ENCODE measurements at regions of chr1 and their contacts with region 1.

Region 1: GRCh38 chr1:162633081-162633762 is 958 bp downstream of the DDR2 start:
- DNase-seq: peak; percentile 64
- ATAC-seq: peak; percentile 82
- H3K4me3 ChIP-seq: peak overlapping the region; percentile 23; the same call in 1 of the 2 replicates
- H3K27ac ChIP-seq: peak overlapping the region; percentile 82
- H3K4me1 ChIP-seq: peaks cover 32% of the 10 kb centered on the region
- H3K27me3 ChIP-seq: no peaks in the 10 kb centered on the region
- CTCF ChIP-seq: no peak
- EP300 ChIP-seq: peak in 1 of 2 experiments; percentile 54; a peak in 1 of 4 replicates
- POLR2A ChIP-seq: no peak
- RAD21 ChIP-seq: no peak

Region 2: GRCh38 chr1:162596514-162597170 is 36.6 kb before region 1 on chr1:
- CTCF ChIA-PET with region 1: interaction called, 5 read pairs
- POLR2A ChIA-PET with region 1: no interaction called
- RAD21 ChIA-PET with region 1: interaction called, 15 read pairs
- SMC1A ChIA-PET with region 1: interaction called, 8 read pairs
- in situ Hi-C with region 1: no loop called
- intact Hi-C with region 1: no loop called
- DNase-seq: no peak
- ATAC-seq: peak; percentile 70
- H3K4me3 ChIP-seq: no peak overlapping the region
- H3K27ac ChIP-seq: no peak overlapping the region
- H3K4me1 ChIP-seq: no peaks in the 10 kb centered on the region
- H3K27me3 ChIP-seq: no peaks in the 10 kb centered on the region
- CTCF ChIP-seq: no peak
- EP300 ChIP-seq: no peak
- POLR2A ChIP-seq: no peak
- RAD21 ChIP-seq: no peak

Region 3: GRCh38 chr1:162663589-162664106 is 30.4 kb after region 1 on chr1:
- CTCF ChIA-PET with region 1: interaction called, 15 read pairs
- POLR2A ChIA-PET with region 1: interaction called, 7 read pairs
- RAD21 ChIA-PET with region 1: interaction called, 34 read pairs
- SMC1A ChIA-PET with region 1: interaction called, 27 read pairs
- in situ Hi-C with region 1: no loop called
- intact Hi-C with region 1: no loop called
- DNase-seq: no peak
- ATAC-seq: peak; percentile 83
- H3K4me3 ChIP-seq: no peak overlapping the region
- H3K27ac ChIP-seq: peak overlapping the region; percentile 13
- H3K4me1 ChIP-seq: peaks cover 6% of the 10 kb centered on the region
- H3K27me3 ChIP-seq: no peaks in the 10 kb centered on the region
- CTCF ChIP-seq: no peak
- EP300 ChIP-seq: no peak
- POLR2A ChIP-seq: no peak
- RAD21 ChIP-seq: no peak

Region 4: DNA sequence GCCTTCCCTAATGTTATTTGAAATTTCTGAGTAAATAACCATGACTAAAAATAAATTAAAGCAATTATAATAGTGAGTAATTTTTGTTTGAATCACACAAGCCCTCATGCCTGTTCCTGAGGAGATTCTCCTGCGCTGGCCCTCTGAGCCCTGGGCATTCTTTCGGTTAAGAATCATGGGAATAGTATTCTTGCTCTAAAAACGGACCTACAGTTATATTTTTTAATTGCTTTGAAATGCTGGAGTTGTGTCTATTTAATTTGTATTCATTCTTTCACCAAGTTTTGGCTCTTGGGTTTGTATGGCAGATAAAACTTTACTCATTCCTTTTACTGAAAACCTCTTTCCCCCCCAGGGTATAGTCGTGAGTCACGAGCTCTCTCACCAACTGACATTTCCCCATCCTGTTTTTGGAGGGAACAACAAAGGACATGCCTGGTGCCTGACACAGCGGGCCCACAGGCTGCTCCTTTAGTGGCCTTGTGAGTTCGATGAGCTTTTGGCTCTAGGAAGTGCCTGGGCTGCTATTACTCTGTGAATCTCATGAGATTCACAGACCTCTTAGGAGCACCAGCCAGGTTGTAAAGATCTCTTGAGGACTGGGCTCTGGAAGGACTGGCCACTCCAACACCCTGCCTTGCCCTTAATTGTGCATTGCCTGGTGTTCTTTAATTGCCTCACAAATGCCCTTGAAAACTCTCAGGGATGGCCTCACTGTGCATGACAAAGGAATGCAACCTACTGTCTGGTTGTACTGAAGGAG is 57.6 kb after region 1 on chr1:
- CTCF ChIA-PET with region 1: no interaction called
- POLR2A ChIA-PET with region 1: interaction called, 10 read pairs
- RAD21 ChIA-PET with region 1: no interaction called
- SMC1A ChIA-PET with region 1: interaction called, 80 read pairs
- in situ Hi-C with region 1: no loop called
- intact Hi-C with region 1: no loop called
- DNase-seq: no peak
- ATAC-seq: peak; percentile 46; the same call in 2 of the 3 replicates
- H3K4me3 ChIP-seq: no peak overlapping the region
- H3K27ac ChIP-seq: no peak overlapping the region
- H3K4me1 ChIP-seq: no peaks in the 10 kb centered on the region
- H3K27me3 ChIP-seq: no peaks in the 10 kb centered on the region
- CTCF ChIP-seq: no peak
- EP300 ChIP-seq: no peak
- POLR2A ChIP-seq: no peak
- RAD21 ChIP-seq: no peak

Region 5: DNA sequence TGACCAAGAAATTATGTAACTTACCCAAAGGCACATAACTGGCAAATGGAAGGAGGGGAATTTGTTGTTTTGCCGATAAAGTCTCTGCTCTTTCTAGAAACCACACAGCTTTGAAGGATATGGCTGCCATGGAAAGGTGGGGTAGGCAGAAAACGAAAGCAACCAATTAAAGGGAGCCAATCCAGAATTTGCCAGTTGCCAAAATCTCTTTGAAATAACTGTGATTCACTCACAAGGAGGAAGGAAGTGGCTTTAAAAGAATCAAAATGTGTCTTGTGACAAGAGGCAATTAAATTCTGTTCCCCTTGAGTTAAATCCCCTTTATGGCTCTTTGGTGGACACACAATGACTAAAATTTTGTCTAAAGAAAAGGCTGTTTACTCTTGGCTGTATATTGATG is 289.0 kb after region 1 on chr1:
- CTCF ChIA-PET with region 1: no interaction called
- POLR2A ChIA-PET with region 1: no interaction called
- RAD21 ChIA-PET with region 1: no interaction called
- SMC1A ChIA-PET with region 1: no interaction called
- in situ Hi-C with region 1: no loop called
- intact Hi-C with region 1: no loop called
- DNase-seq: no peak
- ATAC-seq: no peak
- H3K4me3 ChIP-seq: no peak overlapping the region
- H3K27ac ChIP-seq: no peak overlapping the region
- H3K4me1 ChIP-seq: no peaks in the 10 kb centered on the region
- H3K27me3 ChIP-seq: peaks cover 0 to 2% of the 10 kb centered on the region in 2 experiments; a peak in 2 of 4 replicates
- CTCF ChIP-seq: no peak
- EP300 ChIP-seq: no peak
- POLR2A ChIP-seq: no peak
- RAD21 ChIP-seq: no peak

Region 6: DNA sequence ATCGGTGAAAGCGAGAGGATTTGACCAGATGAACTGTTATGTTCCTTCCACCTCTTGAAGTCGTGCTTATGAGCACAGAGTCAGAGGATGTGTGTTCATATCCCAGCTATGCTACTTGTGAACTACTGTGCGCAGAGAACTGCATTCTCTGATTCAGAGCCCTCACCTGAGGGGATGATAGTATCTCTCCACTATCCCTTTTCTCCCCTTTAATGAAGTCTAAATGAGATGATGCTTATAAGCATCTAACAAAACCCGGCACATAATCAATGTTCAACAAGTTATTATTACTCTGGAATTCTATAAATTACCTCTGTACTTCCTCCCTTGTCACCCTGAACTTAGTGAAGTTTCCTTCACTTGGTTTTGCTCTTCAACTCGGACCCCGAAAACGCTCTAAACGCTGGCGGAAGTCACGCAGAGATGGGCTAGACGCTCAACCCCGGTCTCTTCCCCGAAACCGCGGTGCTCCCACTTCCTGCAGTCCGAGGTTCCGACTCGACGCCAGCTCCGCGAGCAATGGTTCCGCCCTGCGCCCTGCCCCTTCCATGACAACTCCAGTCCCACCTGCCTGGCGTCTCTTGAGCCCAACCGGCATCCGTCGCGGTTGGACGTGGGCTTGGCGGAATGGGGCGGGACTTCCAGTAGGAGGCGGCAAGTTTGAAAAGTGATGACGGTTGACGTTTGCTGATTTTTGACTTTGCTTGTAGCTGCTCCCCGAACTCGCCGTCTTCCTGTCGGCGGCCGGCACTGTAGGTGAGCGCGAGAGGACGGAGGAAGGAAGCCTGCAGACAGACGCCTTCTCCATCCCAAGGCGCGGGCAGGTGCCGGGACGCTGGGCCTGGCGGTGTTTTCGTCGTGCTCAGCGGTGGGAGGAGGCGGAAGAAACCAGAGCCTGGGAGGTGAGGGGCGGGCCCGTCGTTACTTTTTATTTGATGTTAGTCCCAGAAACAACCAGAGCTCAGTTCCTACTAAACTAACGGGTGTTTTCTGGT is 688.4 kb after region 1 on chr1 and contains the start of gene NUF2:
- CTCF ChIA-PET with region 1: no interaction called
- POLR2A ChIA-PET with region 1: no interaction called
- RAD21 ChIA-PET with region 1: no interaction called
- SMC1A ChIA-PET with region 1: no interaction called
- in situ Hi-C with region 1: no loop called
- intact Hi-C with region 1: loop called (anchors 5 kb)
- DNase-seq: peak; percentile 96
- ATAC-seq: peak; percentile 96
- H3K4me3 ChIP-seq: peak within 1 kb of the TSS; percentile 74
- H3K27ac ChIP-seq: peak within 1 kb of the TSS; percentile 82
- H3K4me1 ChIP-seq: no peaks in the 10 kb centered on the region; the same call in 1 of the 2 replicates
- H3K27me3 ChIP-seq: no peaks in the 10 kb centered on the region
- CTCF ChIP-seq: no peak
- EP300 ChIP-seq: peak; percentile 66 to 81; a peak in 3 of 4 replicates
- POLR2A ChIP-seq: peak; percentile 86
- RAD21 ChIP-seq: no peak
- polyA plus RNA-seq, gene NUF2: 27.4 to 34.1 TPM